ENCODE measurements at regions of chr5 and their contacts with region 1.

Region 1: GRCh38 chr5:163695830-163696578 is 190.6 kb downstream of the MAT2B start:
- DNase-seq: peak; percentile 5
- ATAC-seq: peak; percentile 49
- H3K4me3 Mint-ChIP-seq: no peak overlapping the region
- H3K27ac Mint-ChIP-seq: no peak overlapping the region
- H3K4me1 Mint-ChIP-seq: no peaks in the 10 kb centered on the region
- H3K27me3 Mint-ChIP-seq: peaks cover 2% of the 10 kb centered on the region

Region 2: GRCh38 chr5:162852134-162852533 is 843.9 kb before region 1 on chr5:
- CTCF ChIA-PET with region 1: no interaction called
- POLR2A ChIA-PET with region 1: no interaction called
- intact Hi-C with region 1: no loop called
- DNase-seq: no peak
- ATAC-seq: no peak
- H3K4me3 Mint-ChIP-seq: no peak overlapping the region
- H3K27ac Mint-ChIP-seq: no peak overlapping the region
- H3K4me1 Mint-ChIP-seq: no peaks in the 10 kb centered on the region
- H3K27me3 Mint-ChIP-seq: no peaks in the 10 kb centered on the region

Region 3: GRCh38 chr5:164504141-164504772 is 808.3 kb after region 1 on chr5:
- CTCF ChIA-PET with region 1: interaction called, 4 read pairs
- POLR2A ChIA-PET with region 1: no interaction called
- intact Hi-C with region 1: loop called (anchors 2 to 5 kb)
- DNase-seq: peak; percentile 34
- ATAC-seq: no peak
- H3K4me3 Mint-ChIP-seq: no peak overlapping the region
- H3K27ac Mint-ChIP-seq: no peak overlapping the region
- H3K4me1 Mint-ChIP-seq: no peaks in the 10 kb centered on the region
- H3K27me3 Mint-ChIP-seq: no peaks in the 10 kb centered on the region

Region 4: DNA sequence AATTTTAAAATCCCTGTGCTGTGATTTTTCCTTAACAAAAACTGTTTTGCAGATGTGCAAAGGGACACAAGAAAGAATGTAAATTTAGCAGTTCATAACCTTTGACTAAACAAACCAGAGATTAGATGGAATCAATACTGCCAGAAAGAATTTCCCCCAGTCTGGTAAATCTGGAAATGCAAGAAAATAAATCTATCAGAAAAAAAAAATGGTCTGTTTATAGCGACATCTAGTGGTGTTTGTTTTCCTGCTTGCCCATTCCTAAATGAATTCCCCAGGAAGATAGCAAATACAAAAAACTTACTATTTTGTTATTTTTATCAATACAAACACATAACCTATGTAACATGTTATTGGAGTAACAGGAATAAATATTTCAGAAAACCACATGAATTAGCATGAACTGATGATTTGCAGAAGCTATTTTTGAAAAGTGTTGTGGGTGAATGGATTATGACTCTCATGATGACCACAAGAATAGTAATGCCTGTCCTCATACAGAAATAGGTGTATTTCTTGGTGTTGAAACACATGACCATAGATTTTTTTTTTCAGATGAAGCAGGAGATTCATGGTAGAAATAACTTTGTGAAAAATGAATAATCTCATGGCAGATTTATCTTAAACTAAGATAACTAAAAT is 1513.2 kb after region 1 on chr5:
- CTCF ChIA-PET with region 1: no interaction called
- POLR2A ChIA-PET with region 1: no interaction called
- intact Hi-C with region 1: loop called in 1 of 2 experiments (anchors 5 kb)
- DNase-seq: no peak
- ATAC-seq: no peak
- H3K4me3 Mint-ChIP-seq: no peak overlapping the region
- H3K27ac Mint-ChIP-seq: no peak overlapping the region
- H3K4me1 Mint-ChIP-seq: no peaks in the 10 kb centered on the region
- H3K27me3 Mint-ChIP-seq: no peaks in the 10 kb centered on the region

Measured in activated CD4-positive, alpha-beta T cell treated with anti-CD3 and anti-CD28 coated beads for 36 hours (primary cell).